Prostate gland (tissue), 2 donors: ENCODE measurements at regions of chr19 and their contacts with region 1.

Region 1: DNA sequence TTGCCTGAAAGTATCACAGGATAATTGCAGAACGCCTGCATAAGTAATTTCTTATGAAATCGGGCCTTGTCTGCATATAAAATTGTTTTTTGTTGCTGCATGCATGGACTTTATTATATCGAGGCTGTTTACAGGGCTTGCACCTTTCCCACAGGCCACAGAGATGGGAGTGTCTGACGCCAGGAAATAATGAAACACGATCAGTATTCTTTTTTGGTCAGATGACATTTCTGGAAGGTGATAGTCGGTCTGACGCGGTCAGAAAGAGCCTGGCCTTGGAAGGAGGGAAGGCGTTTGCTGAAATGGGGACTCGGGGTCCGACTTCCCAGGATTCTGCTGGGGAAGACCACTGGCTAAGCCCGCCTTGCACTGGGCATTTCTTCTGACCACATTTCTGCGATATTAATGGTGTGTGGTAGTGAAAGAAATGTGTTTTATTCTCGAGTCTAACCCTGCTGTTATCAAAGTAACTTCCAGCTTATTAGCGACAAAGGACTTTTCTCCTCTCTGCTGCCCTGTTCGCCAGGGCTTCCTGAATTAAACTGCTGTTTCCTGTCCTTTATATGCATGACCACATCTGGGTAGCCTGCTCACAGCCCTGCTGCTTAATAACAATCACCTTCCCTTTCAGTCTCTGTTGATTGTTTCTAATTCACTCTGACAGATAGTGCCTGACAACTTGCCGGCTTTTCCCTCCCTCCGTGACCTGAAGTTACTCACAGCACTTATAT is 11.6 kb upstream of the ZNF536 start:
- DNase-seq: no peak
- H3K4me3 ChIP-seq: no peak overlapping the region
- H3K27ac ChIP-seq: no peak overlapping the region
- H3K4me1 ChIP-seq: no peaks in the 10 kb centered on the region
- H3K27me3 ChIP-seq: no peaks in the 10 kb centered on the region
- CTCF ChIP-seq: no peak
- POLR2A ChIP-seq: no peak

Region 2: DNA sequence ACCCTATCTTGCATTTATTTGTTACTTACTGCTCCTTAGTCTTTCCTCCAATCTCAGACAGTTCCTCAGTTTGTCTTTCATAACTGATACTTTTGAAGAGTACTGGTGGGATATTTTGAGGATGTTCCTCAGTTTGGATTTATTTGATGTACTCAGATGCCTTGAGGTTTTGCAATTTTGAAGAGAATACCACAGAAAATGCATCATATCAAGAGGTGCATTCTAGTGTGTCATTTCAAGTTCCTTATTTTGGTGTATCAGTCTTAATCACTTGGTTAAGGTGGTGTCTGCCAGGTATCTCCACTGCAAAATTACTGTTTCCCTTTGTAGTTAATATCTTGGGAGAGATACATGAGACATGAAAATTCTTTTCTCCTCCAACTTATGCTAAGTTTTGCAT is 343.4 kb before region 1 on chr19:
- intact Hi-C with region 1: loop called (anchors 10 kb)
- DNase-seq: no peak
- H3K4me3 ChIP-seq: no peak overlapping the region
- H3K27ac ChIP-seq: no peak overlapping the region
- H3K4me1 ChIP-seq: no peaks in the 10 kb centered on the region
- H3K27me3 ChIP-seq: no peaks in the 10 kb centered on the region
- CTCF ChIP-seq: no peak
- POLR2A ChIP-seq: no peak

Region 3: DNA sequence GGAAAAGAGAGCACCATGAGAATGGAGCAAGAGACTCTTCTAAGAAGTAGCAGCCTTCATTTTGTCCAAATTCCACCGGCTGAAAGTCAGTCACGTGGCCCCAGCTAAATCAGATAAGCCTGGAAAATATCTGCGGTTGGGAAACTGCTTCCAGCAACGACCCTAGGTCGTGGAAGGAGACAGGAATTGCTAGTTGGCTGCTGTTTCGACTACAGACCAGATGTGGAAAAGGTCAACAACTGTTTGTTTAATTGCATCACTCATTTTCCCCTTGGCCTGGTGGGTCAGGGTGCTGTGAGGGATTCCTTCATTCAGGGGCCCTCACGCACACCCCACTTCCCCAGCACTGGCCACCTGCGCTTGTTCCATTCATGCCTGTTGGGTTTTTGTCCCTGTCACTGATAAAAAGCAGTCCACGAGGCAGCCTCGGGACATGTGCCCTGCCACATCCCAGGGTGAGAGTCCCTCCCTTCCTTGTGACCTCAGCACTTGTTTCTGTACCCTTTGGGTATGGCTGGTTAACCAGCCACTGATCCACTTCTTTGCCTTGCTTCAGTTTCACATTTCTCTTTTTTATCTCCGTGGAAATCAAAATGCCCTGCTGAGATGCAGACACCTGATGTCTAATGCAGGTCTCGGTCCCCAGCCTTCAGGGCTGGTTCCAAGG is 118.9 kb after region 1 on chr19:
- intact Hi-C with region 1: no loop called
- DNase-seq: no peak
- H3K4me3 ChIP-seq: no peak overlapping the region
- H3K27ac ChIP-seq: no peak overlapping the region
- H3K4me1 ChIP-seq: no peaks in the 10 kb centered on the region
- H3K27me3 ChIP-seq: no peaks in the 10 kb centered on the region
- CTCF ChIP-seq: no peak
- POLR2A ChIP-seq: no peak